CD8-positive, alpha-beta T cell (primary cell): ENCODE measurements at regions of chr1 and their contacts with region 1.

Region 1: GRCh38 chr1:64923294-64923721 is 43.0 kb downstream of the JAK1 start:
- DNase-seq: peak in 5 of 9 experiments; percentile 19 to 74 (median 41)
- ATAC-seq: peak; percentile 32
- H3K4me3 ChIP-seq: no peak overlapping the region
- H3K4me3 Mint-ChIP-seq: peak overlapping the region; percentile 19
- H3K27ac ChIP-seq: peak overlapping the region in 1 of 2 experiments; percentile 19
- H3K27ac Mint-ChIP-seq: peak overlapping the region; percentile 29
- H3K4me1 ChIP-seq: peaks cover 83% of the 10 kb centered on the region
- H3K4me1 Mint-ChIP-seq: peaks cover 96% of the 10 kb centered on the region
- H3K27me3 ChIP-seq: no peaks in the 10 kb centered on the region
- H3K27me3 Mint-ChIP-seq: no peaks in the 10 kb centered on the region
- CTCF ChIP-seq: no peak

Region 2: GRCh38 chr1:64654519-64655341 is 268.6 kb before region 1 on chr1:
- CTCF ChIA-PET with region 1: no interaction called
- POLR2A ChIA-PET with region 1: no interaction called
- intact Hi-C with region 1: no loop called
- DNase-seq: peak in 1 of 9 experiments; percentile 5
- ATAC-seq: no peak
- H3K4me3 ChIP-seq: no peak overlapping the region
- H3K4me3 Mint-ChIP-seq: no peak overlapping the region
- H3K27ac ChIP-seq: no peak overlapping the region
- H3K27ac Mint-ChIP-seq: no peak overlapping the region
- H3K4me1 ChIP-seq: no peaks in the 10 kb centered on the region
- H3K4me1 Mint-ChIP-seq: no peaks in the 10 kb centered on the region
- H3K27me3 ChIP-seq: no peaks in the 10 kb centered on the region
- H3K27me3 Mint-ChIP-seq: no peaks in the 10 kb centered on the region
- CTCF ChIP-seq: no peak

Region 3: DNA sequence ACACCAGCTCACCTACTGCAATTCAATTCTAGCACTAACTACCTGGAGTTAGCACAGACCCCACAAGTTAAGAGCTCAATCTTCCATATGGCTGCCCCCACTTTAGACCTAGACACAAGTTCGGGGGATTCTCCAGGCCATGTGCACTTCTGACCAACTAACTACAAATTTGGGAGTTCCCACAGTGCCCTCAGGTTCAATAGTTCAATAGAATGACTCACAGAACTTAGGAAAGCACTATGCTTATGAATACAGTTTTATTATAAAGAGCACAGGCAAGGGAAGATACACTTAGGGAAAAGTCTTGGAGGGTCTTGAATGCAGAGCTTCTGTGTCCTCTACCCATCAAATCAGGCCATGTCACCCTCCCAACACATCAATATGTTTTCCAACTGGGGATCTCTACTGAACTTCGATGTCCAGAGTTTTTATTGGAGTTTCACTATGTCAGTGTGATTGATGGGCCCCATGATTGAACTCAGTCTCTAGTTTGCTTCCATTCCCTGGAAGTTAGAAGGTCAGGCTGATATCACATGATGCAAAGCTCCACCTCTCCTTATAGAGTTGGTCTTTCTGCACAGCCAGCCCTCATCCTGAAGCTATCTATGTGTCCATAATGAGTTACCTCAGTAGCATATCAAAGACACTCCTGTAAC is 132.3 kb before region 1 on chr1:
- CTCF ChIA-PET with region 1: no interaction called
- POLR2A ChIA-PET with region 1: no interaction called
- intact Hi-C with region 1: no loop called
- DNase-seq: no peak
- ATAC-seq: no peak
- H3K4me3 ChIP-seq: no peak overlapping the region
- H3K4me3 Mint-ChIP-seq: no peak overlapping the region
- H3K27ac ChIP-seq: no peak overlapping the region
- H3K27ac Mint-ChIP-seq: no peak overlapping the region
- H3K4me1 ChIP-seq: no peaks in the 10 kb centered on the region
- H3K4me1 Mint-ChIP-seq: no peaks in the 10 kb centered on the region
- H3K27me3 ChIP-seq: no peaks in the 10 kb centered on the region
- H3K27me3 Mint-ChIP-seq: no peaks in the 10 kb centered on the region
- CTCF ChIP-seq: no peak

Region 4: DNA sequence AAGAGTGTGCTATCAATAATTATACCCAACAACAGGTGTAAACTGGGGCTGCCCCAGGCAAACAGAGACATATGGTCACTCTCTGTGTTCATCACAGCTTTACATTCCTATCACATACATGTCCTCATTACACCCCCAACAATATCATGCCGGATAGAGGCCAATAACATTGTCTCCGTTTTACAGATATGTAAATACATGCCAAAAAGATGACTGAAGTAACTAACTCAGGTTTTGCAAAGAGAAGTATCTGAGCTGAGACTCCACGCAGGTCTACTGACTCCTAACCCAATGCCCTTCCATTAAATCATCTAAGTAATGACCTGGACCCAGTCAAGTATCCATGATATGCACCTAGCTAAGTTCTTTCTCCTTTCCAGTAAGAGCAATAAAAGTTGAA is 12.0 kb before region 1 on chr1:
- CTCF ChIA-PET with region 1: interaction called, 3 read pairs
- POLR2A ChIA-PET with region 1: interaction called, 4 read pairs
- intact Hi-C with region 1: loop called in 1 of 2 experiments (anchors 1 kb)
- DNase-seq: no peak
- ATAC-seq: no peak
- H3K4me3 ChIP-seq: no peak overlapping the region
- H3K4me3 Mint-ChIP-seq: no peak overlapping the region
- H3K27ac ChIP-seq: no peak overlapping the region
- H3K27ac Mint-ChIP-seq: no peak overlapping the region
- H3K4me1 ChIP-seq: peaks cover 86% of the 10 kb centered on the region
- H3K4me1 Mint-ChIP-seq: peaks cover 94% of the 10 kb centered on the region
- H3K27me3 ChIP-seq: no peaks in the 10 kb centered on the region
- H3K27me3 Mint-ChIP-seq: no peaks in the 10 kb centered on the region
- CTCF ChIP-seq: no peak

Region 5: DNA sequence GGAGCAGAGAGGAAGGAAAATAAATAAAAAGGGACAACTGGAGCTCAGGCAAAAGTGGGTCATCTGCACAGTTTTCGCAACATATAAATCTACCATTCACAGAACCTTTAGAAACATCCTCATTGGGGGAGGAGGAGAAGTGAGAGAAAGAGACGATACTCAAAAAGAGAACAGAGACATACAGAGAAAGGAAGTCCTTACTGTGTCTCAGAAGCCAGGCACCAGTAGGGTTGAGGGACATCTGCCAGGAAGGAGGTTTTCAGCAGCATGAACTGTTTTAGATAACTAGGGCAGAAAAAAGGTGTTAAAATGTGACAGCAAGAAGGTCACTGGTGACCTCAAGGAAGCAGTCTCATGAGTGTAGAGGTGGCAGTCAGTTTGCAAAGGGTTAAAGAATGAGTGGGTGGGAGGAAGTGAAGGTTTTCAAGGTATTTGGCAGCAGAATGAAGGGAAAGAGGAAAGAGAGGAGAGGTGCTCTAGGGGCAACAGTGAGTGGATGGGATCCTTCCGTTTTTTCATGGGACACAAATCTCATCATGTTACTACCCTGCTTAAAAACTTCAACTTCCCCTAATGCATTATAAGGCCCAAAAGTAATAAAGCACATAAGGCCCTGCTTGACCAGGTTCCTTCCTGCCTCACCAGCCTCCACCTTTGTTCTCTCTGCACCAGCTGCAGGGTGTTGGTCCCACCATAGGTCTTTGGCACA is 33.6 kb after region 1 on chr1:
- CTCF ChIA-PET with region 1: no interaction called
- POLR2A ChIA-PET with region 1: no interaction called
- intact Hi-C with region 1: loop called (anchors 5 kb)
- DNase-seq: peak in 3 of 9 experiments; percentile 36 to 65 (median 46)
- ATAC-seq: peak; percentile 67
- H3K4me3 ChIP-seq: no peak overlapping the region
- H3K4me3 Mint-ChIP-seq: no peak overlapping the region
- H3K27ac ChIP-seq: peak overlapping the region in 1 of 2 experiments; percentile 61
- H3K27ac Mint-ChIP-seq: no peak overlapping the region
- H3K4me1 ChIP-seq: peaks cover 92% of the 10 kb centered on the region
- H3K4me1 Mint-ChIP-seq: peaks cover 56% of the 10 kb centered on the region
- H3K27me3 ChIP-seq: no peaks in the 10 kb centered on the region
- H3K27me3 Mint-ChIP-seq: no peaks in the 10 kb centered on the region
- CTCF ChIP-seq: no peak

Region 6: GRCh38 chr1:65002508-65003315 is 79.4 kb after region 1 on chr1:
- CTCF ChIA-PET with region 1: no interaction called
- POLR2A ChIA-PET with region 1: no interaction called
- intact Hi-C with region 1: loop called in 1 of 2 experiments (anchors 5 kb)
- DNase-seq: peak; percentile 42 to 91 (median 79)
- ATAC-seq: peak; percentile 87
- H3K4me3 ChIP-seq: peak overlapping the region; percentile 56 to 66
- H3K4me3 Mint-ChIP-seq: peak overlapping the region; percentile 84
- H3K27ac ChIP-seq: peak overlapping the region; percentile 10 to 61
- H3K27ac Mint-ChIP-seq: peak overlapping the region; percentile 91
- H3K4me1 ChIP-seq: peaks cover 19% of the 10 kb centered on the region
- H3K4me1 Mint-ChIP-seq: peaks cover 30% of the 10 kb centered on the region
- H3K27me3 ChIP-seq: peaks cover 0 to 2% of the 10 kb centered on the region in 2 experiments
- H3K27me3 Mint-ChIP-seq: no peaks in the 10 kb centered on the region
- CTCF ChIP-seq: no peak